ENCODE measurements at regions of chr4 and their contacts with region 1.

Region 1: DNA sequence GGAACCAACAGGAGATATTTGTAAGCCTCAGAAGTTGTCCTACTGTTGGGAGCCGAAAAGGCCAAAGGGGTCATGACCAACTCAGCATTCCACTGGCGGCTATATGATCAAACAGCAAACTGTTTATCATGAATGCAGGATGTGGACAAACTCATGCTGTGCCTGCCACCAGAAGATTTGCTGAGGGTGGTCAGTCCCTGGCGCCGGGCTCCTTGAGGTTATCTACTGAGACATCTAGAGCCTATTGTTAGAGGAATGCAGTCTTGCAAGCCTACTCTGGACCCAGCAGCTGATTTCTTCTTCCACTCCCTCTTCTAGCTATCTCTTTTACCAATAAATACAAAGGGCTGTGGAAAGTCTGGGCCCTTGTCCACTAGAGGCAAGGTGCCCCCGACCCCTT is 99.2 kb upstream of the FSTL5 start:
- DNase-seq: no peak
- ATAC-seq: no peak
- H3K4me3 ChIP-seq: no peak overlapping the region
- H3K27ac ChIP-seq: no peak overlapping the region
- H3K4me1 ChIP-seq: no peaks in the 10 kb centered on the region
- H3K27me3 ChIP-seq: no peaks in the 10 kb centered on the region
- CTCF ChIP-seq: no peak
- POLR2A ChIP-seq: no peak
- RAD21 ChIP-seq: no peak

Region 2: GRCh38 chr4:162131256-162131655 is 131.8 kb before region 1 on chr4:
- CTCF ChIA-PET with region 1: no interaction called
- POLR2A ChIA-PET with region 1: no interaction called
- dilution Hi-C with region 1: no loop called
- in situ Hi-C with region 1: no loop called
- intact Hi-C with region 1: no loop called
- DNase-seq: no peak
- ATAC-seq: no peak
- H3K4me3 ChIP-seq: no peak overlapping the region
- H3K27ac ChIP-seq: no peak overlapping the region
- H3K4me1 ChIP-seq: no peaks in the 10 kb centered on the region
- H3K27me3 ChIP-seq: no peaks in the 10 kb centered on the region
- CTCF ChIP-seq: no peak
- POLR2A ChIP-seq: no peak
- RAD21 ChIP-seq: no peak

Region 3: DNA sequence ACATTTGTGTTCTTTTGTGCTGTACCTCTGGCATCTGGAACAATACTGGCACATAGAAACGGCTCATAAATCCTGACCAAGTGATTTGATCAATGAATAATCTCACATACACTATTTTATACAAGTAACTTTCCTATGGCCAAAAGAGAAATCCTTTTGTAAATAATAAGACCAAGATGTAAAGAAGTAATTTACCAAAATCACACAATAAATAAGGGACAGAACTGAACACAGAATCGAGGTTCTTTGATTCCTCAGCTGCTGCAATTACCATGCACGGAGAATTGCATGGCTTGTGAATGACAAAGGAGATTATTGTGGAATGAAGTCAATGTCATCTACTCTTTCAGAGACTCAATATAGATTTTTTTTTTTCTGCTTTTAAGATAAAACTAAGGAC is 1914.1 kb after region 1 on chr4:
- CTCF ChIA-PET with region 1: no interaction called
- POLR2A ChIA-PET with region 1: no interaction called
- dilution Hi-C with region 1: no loop called
- in situ Hi-C with region 1: no loop called
- intact Hi-C with region 1: loop called (anchors 5 kb)
- DNase-seq: no peak
- ATAC-seq: no peak
- H3K4me3 ChIP-seq: no peak overlapping the region
- H3K27ac ChIP-seq: no peak overlapping the region
- H3K4me1 ChIP-seq: no peaks in the 10 kb centered on the region
- H3K27me3 ChIP-seq: no peaks in the 10 kb centered on the region
- CTCF ChIP-seq: no peak
- POLR2A ChIP-seq: no peak
- RAD21 ChIP-seq: no peak